CD8-positive, alpha-beta T cell (primary cell): ENCODE measurements at regions of chr12 and their contacts with region 1.

Region 1: GRCh38 chr12:5988659-5989116 is 43.6 kb upstream of the ANO2 start:
- DNase-seq: peak; percentile 49 to 81 (median 68)
- ATAC-seq: peak; percentile 75
- H3K4me3 ChIP-seq: no peak overlapping the region
- H3K4me3 Mint-ChIP-seq: no peak overlapping the region
- H3K27ac ChIP-seq: no peak overlapping the region
- H3K27ac Mint-ChIP-seq: no peak overlapping the region
- H3K4me1 ChIP-seq: no peaks in the 10 kb centered on the region
- H3K4me1 Mint-ChIP-seq: peaks cover 2% of the 10 kb centered on the region
- H3K27me3 ChIP-seq: no peaks in the 10 kb centered on the region
- H3K27me3 Mint-ChIP-seq: no peaks in the 10 kb centered on the region
- CTCF ChIP-seq: peak; percentile 91

Region 2: DNA sequence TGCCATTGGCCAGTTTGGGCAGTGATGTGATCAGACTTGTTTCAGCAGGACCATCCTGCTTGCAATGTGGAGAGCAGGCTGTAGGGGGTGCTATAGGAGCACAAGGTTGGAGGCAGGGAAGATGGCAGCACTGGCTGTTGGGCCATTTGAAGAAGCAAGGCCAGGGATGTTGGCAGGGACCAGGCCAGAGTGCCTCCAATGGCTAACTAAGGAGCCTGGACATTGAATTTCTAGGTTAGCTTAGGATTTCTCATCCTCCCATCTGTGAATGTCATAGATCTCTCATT is 1632.7 kb before region 1 on chr12:
- CTCF ChIA-PET with region 1: no interaction called
- POLR2A ChIA-PET with region 1: no interaction called
- intact Hi-C with region 1: no loop called
- DNase-seq: peak in 8 of 9 experiments; percentile 10 to 51 (median 44)
- ATAC-seq: no peak
- H3K4me3 ChIP-seq: no peak overlapping the region
- H3K4me3 Mint-ChIP-seq: no peak overlapping the region
- H3K27ac ChIP-seq: no peak overlapping the region
- H3K27ac Mint-ChIP-seq: no peak overlapping the region
- H3K4me1 ChIP-seq: no peaks in the 10 kb centered on the region
- H3K4me1 Mint-ChIP-seq: peaks cover 8% of the 10 kb centered on the region
- H3K27me3 ChIP-seq: no peaks in the 10 kb centered on the region
- H3K27me3 Mint-ChIP-seq: no peaks in the 10 kb centered on the region
- CTCF ChIP-seq: peak; percentile 30

Region 3: DNA sequence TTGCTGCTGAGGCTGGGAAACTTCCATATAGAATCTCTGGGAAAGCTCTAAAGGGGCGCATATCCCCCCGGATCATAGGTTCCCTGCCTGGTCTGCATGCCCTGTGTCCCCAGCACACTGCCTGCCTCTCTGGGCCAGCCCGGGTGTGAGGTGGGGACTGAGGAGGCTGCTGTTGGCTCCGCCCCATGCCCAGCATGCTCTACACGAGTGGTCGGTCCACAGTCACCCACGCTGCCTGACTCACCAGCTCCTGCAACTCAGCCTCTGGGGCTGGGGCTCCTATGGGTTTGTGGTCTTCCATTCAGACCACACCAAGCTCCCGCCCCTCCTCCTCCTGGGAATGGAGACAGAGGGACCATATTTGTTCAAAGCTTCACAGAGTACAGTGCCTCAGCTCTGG is 44.9 kb after region 1 on chr12:
- CTCF ChIA-PET with region 1: interaction called, 168 read pairs
- POLR2A ChIA-PET with region 1: no interaction called
- intact Hi-C with region 1: no loop called
- DNase-seq: no peak
- ATAC-seq: no peak
- H3K4me3 ChIP-seq: no peak overlapping the region
- H3K4me3 Mint-ChIP-seq: no peak overlapping the region
- H3K27ac ChIP-seq: no peak overlapping the region
- H3K27ac Mint-ChIP-seq: no peak overlapping the region
- H3K4me1 ChIP-seq: no peaks in the 10 kb centered on the region
- H3K4me1 Mint-ChIP-seq: no peaks in the 10 kb centered on the region
- H3K27me3 ChIP-seq: no peaks in the 10 kb centered on the region
- H3K27me3 Mint-ChIP-seq: peaks cover 3% of the 10 kb centered on the region
- CTCF ChIP-seq: no peak

Region 4: GRCh38 chr12:6047249-6048237 is 58.9 kb after region 1 on chr12:
- CTCF ChIA-PET with region 1: interaction called, 168 read pairs
- POLR2A ChIA-PET with region 1: no interaction called
- intact Hi-C with region 1: no loop called
- DNase-seq: no peak
- ATAC-seq: no peak
- H3K4me3 ChIP-seq: no peak overlapping the region
- H3K4me3 Mint-ChIP-seq: no peak overlapping the region
- H3K27ac ChIP-seq: no peak overlapping the region
- H3K27ac Mint-ChIP-seq: no peak overlapping the region
- H3K4me1 ChIP-seq: no peaks in the 10 kb centered on the region
- H3K4me1 Mint-ChIP-seq: no peaks in the 10 kb centered on the region
- H3K27me3 ChIP-seq: no peaks in the 10 kb centered on the region
- H3K27me3 Mint-ChIP-seq: peaks cover 9% of the 10 kb centered on the region
- CTCF ChIP-seq: no peak

Region 5: DNA sequence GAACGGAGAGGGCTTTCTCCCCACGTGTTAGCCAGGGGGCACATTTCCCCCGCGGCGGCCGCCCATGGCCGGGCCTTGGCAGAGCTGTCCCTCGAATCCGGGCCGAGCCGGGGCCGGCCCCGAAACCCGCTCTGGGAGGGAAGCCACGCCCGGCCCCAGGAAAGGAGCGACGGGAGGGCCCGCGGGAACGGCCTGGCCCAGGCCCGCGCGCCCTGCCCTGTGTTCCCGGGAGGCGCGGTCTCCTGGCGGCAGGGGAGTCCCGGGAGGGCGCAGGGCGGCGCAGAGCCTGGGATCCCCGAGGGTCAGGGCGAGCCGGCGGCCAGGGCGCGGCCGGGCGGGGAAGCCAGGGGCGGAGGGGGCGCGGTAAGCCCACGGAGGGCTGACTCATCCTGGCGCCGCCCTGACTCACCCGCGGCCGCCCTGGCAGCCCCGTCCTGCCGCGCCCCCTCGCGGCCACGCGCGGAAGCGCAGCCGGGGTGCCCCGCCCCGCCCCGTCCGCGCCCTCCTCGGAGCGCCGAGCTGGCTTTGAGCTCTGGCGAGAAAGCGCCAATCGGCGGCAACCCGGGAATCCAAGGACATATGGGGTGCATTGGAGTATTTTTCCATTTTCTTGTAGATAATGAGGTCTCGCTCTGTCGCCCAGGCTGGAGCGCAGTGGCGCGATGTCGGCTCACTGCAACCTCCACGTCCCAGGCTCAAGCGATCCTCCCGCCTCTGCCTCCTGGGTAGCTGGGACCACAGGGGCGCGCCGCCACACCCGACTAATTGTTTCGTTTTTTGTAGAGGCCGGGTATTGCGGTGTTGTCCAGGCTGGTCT is 290.0 kb after region 1 on chr12:
- CTCF ChIA-PET with region 1: interaction called, 78 read pairs
- POLR2A ChIA-PET with region 1: no interaction called
- intact Hi-C with region 1: no loop called
- DNase-seq: peak; percentile 72 to 93 (median 86)
- ATAC-seq: peak; percentile 100
- H3K4me3 ChIP-seq: peak overlapping the region; percentile 7 to 50
- H3K4me3 Mint-ChIP-seq: peak overlapping the region; percentile 72
- H3K27ac ChIP-seq: no peak overlapping the region
- H3K27ac Mint-ChIP-seq: no peak overlapping the region
- H3K4me1 ChIP-seq: peaks cover 6% of the 10 kb centered on the region
- H3K4me1 Mint-ChIP-seq: peaks cover 5% of the 10 kb centered on the region
- H3K27me3 ChIP-seq: peaks cover 0 to 6% of the 10 kb centered on the region in 2 experiments
- H3K27me3 Mint-ChIP-seq: peaks cover 27% of the 10 kb centered on the region
- CTCF ChIP-seq: peak; percentile 93